ENCODE measurements at regions of chr1 and their contacts with region 1.

Region 1: GRCh38 chr1:77219166-77219887 is at the start of gene PIGK:
- DNase-seq: peak; percentile 95
- H3K4me3 Mint-ChIP-seq: peak within 1 kb of the TSS; percentile 93
- H3K27ac Mint-ChIP-seq: peak within 1 kb of the TSS; percentile 94
- H3K4me1 Mint-ChIP-seq: peaks cover 37% of the 10 kb centered on the region
- H3K27me3 Mint-ChIP-seq: no peaks in the 10 kb centered on the region
- total RNA-seq, gene PIGK: 27.3 to 30.8 TPM

Region 2: GRCh38 chr1:76074321-76075187 is 1144.8 kb before region 1 on chr1 and contains the start of gene ST6GALNAC3:
- CTCF ChIA-PET with region 1: no interaction called
- intact Hi-C with region 1: loop called (anchors 2 kb)
- DNase-seq: peak; percentile 78
- H3K4me3 Mint-ChIP-seq: peak within 1 kb of the TSS; percentile 83
- H3K27ac Mint-ChIP-seq: no peak within 1 kb of the TSS
- H3K4me1 Mint-ChIP-seq: peaks cover 25% of the 10 kb centered on the region
- H3K27me3 Mint-ChIP-seq: no peaks in the 10 kb centered on the region
- total RNA-seq, gene ST6GALNAC3: 2.5 to 2.8 TPM

Region 3: GRCh38 chr1:77267035-77267434 is 47.7 kb after region 1 on chr1:
- CTCF ChIA-PET with region 1: no interaction called
- intact Hi-C with region 1: loop called (anchors 1 kb)
- DNase-seq: peak; percentile 29
- H3K4me3 Mint-ChIP-seq: no peak overlapping the region
- H3K27ac Mint-ChIP-seq: no peak overlapping the region
- H3K4me1 Mint-ChIP-seq: peaks cover 3% of the 10 kb centered on the region
- H3K27me3 Mint-ChIP-seq: no peaks in the 10 kb centered on the region

Region 4: DNA sequence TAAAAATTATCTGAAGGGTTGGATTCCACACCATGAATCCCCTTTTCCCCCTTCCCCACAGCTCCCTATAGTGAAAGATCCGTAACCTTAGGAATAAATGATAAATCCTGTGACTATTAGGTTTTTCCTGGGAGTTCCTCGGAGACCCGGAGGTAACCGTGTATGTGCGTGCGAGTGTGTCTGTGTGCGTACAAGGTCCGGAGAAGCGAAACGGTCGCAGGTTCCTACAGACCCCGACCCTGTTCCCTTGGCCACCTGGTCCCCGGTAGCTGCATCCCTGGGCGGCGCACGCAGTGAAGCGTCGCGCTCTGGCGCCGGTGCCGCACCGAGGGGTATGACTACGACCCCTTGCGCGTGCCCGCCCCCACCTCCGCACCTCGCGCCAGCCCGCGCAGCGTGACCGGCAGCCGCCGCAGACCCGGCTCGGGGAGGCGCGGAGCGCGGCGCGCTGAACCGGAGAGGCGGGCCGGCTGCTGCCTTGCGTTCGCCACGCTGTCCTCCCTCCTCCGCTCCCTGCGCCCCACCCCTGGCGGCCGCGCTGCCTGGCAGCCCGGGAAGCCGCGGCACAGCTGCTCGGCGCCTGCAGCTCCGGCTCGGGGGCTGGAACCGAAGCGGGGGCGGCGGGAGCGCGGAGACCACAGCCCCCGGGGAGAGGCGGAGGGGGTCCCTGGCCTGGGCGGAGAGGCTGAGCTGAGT is 62.3 kb after region 1 on chr1 and contains the start of gene AK5:
- CTCF ChIA-PET with region 1: no interaction called
- intact Hi-C with region 1: loop called (anchors 1 kb)
- DNase-seq: peak; percentile 58
- H3K4me3 Mint-ChIP-seq: peak within 1 kb of the TSS; percentile 75
- H3K27ac Mint-ChIP-seq: no peak within 1 kb of the TSS
- H3K4me1 Mint-ChIP-seq: peaks cover 37% of the 10 kb centered on the region
- H3K27me3 Mint-ChIP-seq: no peaks in the 10 kb centered on the region
- total RNA-seq, gene AK5: 7.0 to 9.1 TPM

Region 5: DNA sequence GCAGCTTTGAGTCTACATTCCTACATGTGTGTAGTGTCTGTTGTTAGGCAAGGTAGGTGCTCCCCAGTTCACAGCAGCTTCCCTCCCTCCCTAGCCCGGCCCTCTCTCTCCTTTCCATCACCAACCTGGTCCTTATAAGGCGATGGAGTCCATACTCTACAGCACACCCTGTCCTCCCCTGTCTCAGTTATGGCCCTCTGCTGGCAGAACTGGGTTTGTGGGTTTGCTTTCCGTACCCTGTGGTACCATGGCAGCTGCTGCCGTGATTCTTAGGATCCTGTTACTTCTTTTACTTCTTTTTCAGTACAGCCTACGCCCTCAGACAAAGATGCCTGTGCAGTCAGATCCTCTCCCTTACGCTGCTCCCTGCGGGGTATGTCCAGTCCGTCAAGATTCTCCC is 94.2 kb after region 1 on chr1:
- CTCF ChIA-PET with region 1: no interaction called
- intact Hi-C with region 1: loop called (anchors 1 kb)
- DNase-seq: peak; percentile 59
- H3K4me3 Mint-ChIP-seq: no peak overlapping the region
- H3K27ac Mint-ChIP-seq: no peak overlapping the region
- H3K4me1 Mint-ChIP-seq: peaks cover 37% of the 10 kb centered on the region
- H3K27me3 Mint-ChIP-seq: no peaks in the 10 kb centered on the region

Region 6: GRCh38 chr1:77438236-77438913 is 219.0 kb after region 1 on chr1:
- CTCF ChIA-PET with region 1: no interaction called
- intact Hi-C with region 1: loop called (anchors 2 kb)
- DNase-seq: no peak
- H3K4me3 Mint-ChIP-seq: peak overlapping the region; percentile 70
- H3K27ac Mint-ChIP-seq: peak overlapping the region; percentile 81
- H3K4me1 Mint-ChIP-seq: peaks cover 28% of the 10 kb centered on the region
- H3K27me3 Mint-ChIP-seq: no peaks in the 10 kb centered on the region

Region 7: DNA sequence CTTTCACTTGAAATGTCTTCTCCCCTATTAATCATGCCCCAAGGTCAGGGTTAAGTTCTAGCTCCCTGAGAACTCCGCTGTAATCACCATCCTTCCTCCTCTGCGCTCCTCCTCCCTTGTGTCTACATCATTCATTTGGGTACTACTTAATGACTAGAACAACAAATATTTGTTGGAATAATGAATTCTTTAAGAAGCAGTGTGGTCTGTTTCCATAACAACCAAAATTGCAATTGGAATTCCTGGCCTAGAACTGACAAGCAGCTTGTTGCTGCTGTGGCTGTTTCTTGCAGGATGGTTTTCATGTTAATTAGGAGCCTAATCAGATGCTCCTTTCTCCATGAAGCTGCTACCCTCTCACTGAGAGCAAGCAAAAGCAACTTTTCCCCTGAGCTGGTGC is 270.6 kb after region 1 on chr1:
- CTCF ChIA-PET with region 1: no interaction called
- intact Hi-C with region 1: no loop called
- DNase-seq: no peak
- H3K4me3 Mint-ChIP-seq: no peak overlapping the region
- H3K27ac Mint-ChIP-seq: no peak overlapping the region
- H3K4me1 Mint-ChIP-seq: no peaks in the 10 kb centered on the region
- H3K27me3 Mint-ChIP-seq: no peaks in the 10 kb centered on the region

Region 8: GRCh38 chr1:77759071-77760028 is 540.0 kb after region 1 on chr1 and contains the start of gene USP33:
- CTCF ChIA-PET with region 1: no interaction called
- intact Hi-C with region 1: loop called (anchors 5 kb)
- DNase-seq: peak; percentile 93
- H3K4me3 Mint-ChIP-seq: peak within 1 kb of the TSS; percentile 90
- H3K27ac Mint-ChIP-seq: peak within 1 kb of the TSS; percentile 93
- H3K4me1 Mint-ChIP-seq: peaks cover 46% of the 10 kb centered on the region
- H3K27me3 Mint-ChIP-seq: no peaks in the 10 kb centered on the region
- total RNA-seq, gene USP33: 32.6 to 35.6 TPM

Measured in activated naive CD4-positive, alpha-beta T cell treated with anti-CD3 and anti-CD28 coated beads for 36 hours (primary cell).